ENCODE measurements at regions of chr2 and their contacts with region 1.

Region 1: DNA sequence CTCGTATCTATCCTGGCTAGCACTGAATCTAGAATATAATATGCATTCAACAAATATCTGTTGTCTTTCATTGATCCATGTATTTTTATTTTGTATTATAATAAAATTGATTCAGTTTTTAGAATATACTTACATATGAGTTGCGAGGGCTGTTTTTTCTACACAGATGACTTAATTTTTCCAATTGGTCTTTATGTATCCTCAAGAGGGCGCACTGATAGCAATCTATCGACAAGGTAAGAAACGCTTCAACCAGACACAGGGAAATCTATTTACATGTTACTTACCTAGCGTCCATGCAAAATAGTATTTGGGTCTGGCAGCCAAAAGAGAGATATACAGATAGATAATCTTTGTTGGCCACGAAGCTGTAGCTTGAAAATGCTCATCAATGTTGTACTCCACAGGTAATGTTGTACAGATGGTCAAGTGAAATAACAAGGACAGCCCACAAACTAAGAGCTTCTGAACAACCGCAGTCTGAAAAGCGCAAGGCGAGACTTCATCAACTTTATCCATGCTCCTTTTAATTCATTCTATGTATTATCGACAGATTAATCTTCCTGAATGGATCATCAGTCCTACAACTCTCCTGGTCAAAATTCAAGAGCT is 35.5 kb upstream of the KIDINS220 start:
- DNase-seq: peak; percentile 61
- H3K4me3 Mint-ChIP-seq: no peak overlapping the region
- H3K27ac Mint-ChIP-seq: no peak overlapping the region
- H3K4me1 Mint-ChIP-seq: no peaks in the 10 kb centered on the region
- H3K27me3 Mint-ChIP-seq: no peaks in the 10 kb centered on the region
- CTCF ChIP-seq: peak; percentile 51

Region 2: DNA sequence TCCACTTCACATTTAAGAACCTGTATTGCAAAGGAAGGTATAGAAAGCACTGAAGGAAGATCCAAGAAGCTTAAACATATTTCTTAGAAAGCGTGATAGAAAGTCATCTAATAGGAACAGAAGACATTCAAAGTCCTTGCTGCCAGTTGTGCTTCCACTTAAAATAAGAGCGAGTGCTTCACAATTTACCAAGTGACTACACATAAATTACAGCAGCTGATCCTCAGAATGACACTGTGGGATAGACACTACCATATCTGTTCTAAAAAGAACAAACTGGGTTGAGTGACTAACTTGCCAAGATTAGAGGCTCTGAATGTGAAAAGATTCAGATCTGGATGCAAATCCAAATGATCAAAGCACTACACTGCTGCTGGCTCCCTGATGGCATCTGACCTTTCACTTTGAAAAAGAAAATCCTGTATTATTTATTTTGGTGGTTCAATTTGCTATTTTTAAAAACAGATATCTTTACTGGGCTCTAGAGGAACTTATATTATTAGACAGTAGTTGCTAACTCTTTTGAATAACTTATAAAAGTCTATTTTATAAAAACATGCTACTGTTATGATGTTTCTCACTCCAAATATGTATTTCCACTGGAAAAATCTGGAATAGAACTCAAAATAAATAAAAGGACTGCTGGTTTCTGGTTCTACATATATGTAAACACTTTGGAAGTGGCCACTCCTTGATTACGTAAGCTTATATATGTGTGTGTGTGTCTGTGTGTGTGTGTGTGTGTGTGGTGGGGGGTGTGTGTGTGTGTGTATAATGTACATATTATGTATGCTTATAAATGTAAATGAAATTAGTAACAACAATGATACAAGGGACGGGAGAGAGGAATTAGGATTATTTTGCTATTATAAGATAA is 92.9 kb before region 1 on chr2:
- CTCF ChIA-PET with region 1: no interaction called
- POLR2A ChIA-PET with region 1: no interaction called
- intact Hi-C with region 1: no loop called
- DNase-seq: no peak
- H3K4me3 Mint-ChIP-seq: no peak overlapping the region
- H3K27ac Mint-ChIP-seq: no peak overlapping the region
- H3K4me1 Mint-ChIP-seq: no peaks in the 10 kb centered on the region
- H3K27me3 Mint-ChIP-seq: no peaks in the 10 kb centered on the region
- CTCF ChIP-seq: no peak

Region 3: DNA sequence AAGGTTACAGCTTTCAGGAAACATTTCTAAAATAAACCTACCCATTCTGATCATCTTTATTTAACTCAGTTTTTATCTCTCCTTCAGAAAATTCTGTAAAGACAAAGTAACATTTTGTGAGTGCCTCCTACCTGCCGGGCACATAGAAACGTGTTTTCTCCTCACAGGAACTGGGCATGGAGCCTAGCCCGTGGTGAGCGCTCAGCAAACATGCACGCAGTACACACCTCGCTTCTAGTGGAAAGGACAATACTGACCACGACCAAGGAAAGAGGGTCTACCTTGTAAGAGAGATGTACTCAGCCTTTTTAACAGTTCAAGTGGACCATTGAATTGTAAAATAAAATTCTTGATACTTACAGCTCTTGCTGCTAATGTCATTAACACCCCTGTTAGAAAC is 10.7 kb before region 1 on chr2:
- CTCF ChIA-PET with region 1: interaction called, 16 read pairs
- POLR2A ChIA-PET with region 1: interaction called, 3 read pairs
- intact Hi-C with region 1: no loop called
- DNase-seq: no peak
- H3K4me3 Mint-ChIP-seq: no peak overlapping the region
- H3K27ac Mint-ChIP-seq: no peak overlapping the region
- H3K4me1 Mint-ChIP-seq: peaks cover 5% of the 10 kb centered on the region
- H3K27me3 Mint-ChIP-seq: no peaks in the 10 kb centered on the region
- CTCF ChIP-seq: no peak

Region 4: DNA sequence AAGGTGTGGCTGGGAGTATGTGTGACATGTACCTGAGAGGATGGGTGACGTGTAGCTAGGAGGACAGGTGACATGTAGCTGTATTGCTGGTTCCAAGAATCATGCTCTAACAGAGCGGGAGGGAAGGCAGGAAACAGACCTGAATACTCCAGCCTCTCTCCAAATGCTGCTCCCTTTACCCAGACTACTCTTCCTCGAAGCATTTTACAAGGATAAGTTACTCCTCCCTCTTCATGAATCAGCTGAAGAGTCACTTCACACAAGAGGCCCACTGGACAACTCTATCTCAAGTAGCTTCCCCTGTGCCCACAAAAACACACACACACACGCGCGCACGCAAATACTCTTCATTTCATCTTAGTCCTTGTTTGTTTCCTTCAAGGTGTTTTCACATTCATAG is 17.1 kb after region 1 on chr2:
- CTCF ChIA-PET with region 1: interaction called, 10 read pairs
- POLR2A ChIA-PET with region 1: no interaction called
- intact Hi-C with region 1: no loop called
- DNase-seq: no peak
- H3K4me3 Mint-ChIP-seq: no peak overlapping the region
- H3K27ac Mint-ChIP-seq: peak overlapping the region; percentile 61
- H3K4me1 Mint-ChIP-seq: no peaks in the 10 kb centered on the region
- H3K27me3 Mint-ChIP-seq: no peaks in the 10 kb centered on the region
- CTCF ChIP-seq: no peak

Region 5: GRCh38 chr2:9112079-9112721 is 239.3 kb after region 1 on chr2:
- CTCF ChIA-PET with region 1: interaction called, 9 read pairs
- POLR2A ChIA-PET with region 1: interaction called, 5 read pairs
- intact Hi-C with region 1: loop called (anchors 2 kb)
- DNase-seq: peak; percentile 86
- H3K4me3 Mint-ChIP-seq: peak overlapping the region; percentile 51
- H3K27ac Mint-ChIP-seq: peak overlapping the region; percentile 84
- H3K4me1 Mint-ChIP-seq: peaks cover 26% of the 10 kb centered on the region
- H3K27me3 Mint-ChIP-seq: no peaks in the 10 kb centered on the region
- CTCF ChIP-seq: no peak

Region 6: GRCh38 chr2:9333591-9334171 is 460.8 kb after region 1 on chr2:
- CTCF ChIA-PET with region 1: no interaction called
- POLR2A ChIA-PET with region 1: interaction called, 4 read pairs
- intact Hi-C with region 1: loop called (anchors 10 kb)
- DNase-seq: peak; percentile 78
- H3K4me3 Mint-ChIP-seq: no peak overlapping the region
- H3K27ac Mint-ChIP-seq: peak overlapping the region; percentile 87
- H3K4me1 Mint-ChIP-seq: peaks cover 31% of the 10 kb centered on the region
- H3K27me3 Mint-ChIP-seq: no peaks in the 10 kb centered on the region
- CTCF ChIP-seq: peak; percentile 76

Measured in MCF 10A (cell line).